ENCODE measurements at regions of chr10 and their contacts with region 1.

Region 1: GRCh38 chr10:30701451-30702173 is 72.1 kb upstream of the LYZL2 start:
- DNase-seq: peak; percentile 92
- H3K4me3 Mint-ChIP-seq: peak overlapping the region; percentile 76
- H3K27ac Mint-ChIP-seq: peak overlapping the region; percentile 95
- H3K4me1 Mint-ChIP-seq: peaks cover 78% of the 10 kb centered on the region
- H3K27me3 Mint-ChIP-seq: no peaks in the 10 kb centered on the region

Region 2: DNA sequence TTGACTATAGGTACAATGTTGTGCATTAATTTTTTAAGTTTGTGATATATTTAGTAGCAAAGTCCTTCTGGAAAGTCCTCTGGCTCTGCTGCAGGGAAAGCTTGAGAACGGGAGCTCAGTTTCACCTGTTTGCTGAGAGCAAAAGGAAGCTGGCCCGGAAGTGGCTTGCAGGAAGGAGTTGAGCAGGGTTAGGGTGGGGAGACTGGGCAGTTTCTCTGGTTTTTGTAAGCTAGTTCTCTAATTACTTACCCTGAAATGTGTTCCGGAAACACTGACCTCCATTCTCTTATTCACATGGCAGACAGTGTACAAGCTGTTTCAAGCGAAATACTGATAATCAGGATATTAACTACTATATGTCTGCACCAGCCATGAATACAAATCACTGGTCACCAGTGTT is 245.3 kb before region 1 on chr10:
- intact Hi-C with region 1: no loop called
- DNase-seq: peak; percentile 77
- H3K4me3 Mint-ChIP-seq: peak overlapping the region; percentile 58
- H3K27ac Mint-ChIP-seq: peak overlapping the region; percentile 57
- H3K4me1 Mint-ChIP-seq: peaks cover 24% of the 10 kb centered on the region
- H3K27me3 Mint-ChIP-seq: no peaks in the 10 kb centered on the region

Region 3: GRCh38 chr10:30671026-30671616 is 30.5 kb before region 1 on chr10:
- intact Hi-C with region 1: loop called (anchors 2 kb)
- DNase-seq: peak; percentile 84
- H3K4me3 Mint-ChIP-seq: peak overlapping the region; percentile 63
- H3K27ac Mint-ChIP-seq: no peak overlapping the region
- H3K4me1 Mint-ChIP-seq: peaks cover 13% of the 10 kb centered on the region
- H3K27me3 Mint-ChIP-seq: peaks cover 18% of the 10 kb centered on the region

Region 4: GRCh38 chr10:31345886-31346285 is 644.3 kb after region 1 on chr10:
- intact Hi-C with region 1: loop called (anchors 5 kb)
- DNase-seq: no peak
- H3K4me3 Mint-ChIP-seq: no peak overlapping the region
- H3K27ac Mint-ChIP-seq: no peak overlapping the region
- H3K4me1 Mint-ChIP-seq: peaks cover 42% of the 10 kb centered on the region
- H3K27me3 Mint-ChIP-seq: no peaks in the 10 kb centered on the region